ENCODE measurements at regions of chr17 and their contacts with region 1.

Region 1: GRCh38 chr17:75440738-75441448 is 15.5 kb upstream of the TMEM94 start:
- DNase-seq: no peak
- ATAC-seq: no peak
- H3K4me3 ChIP-seq: no peak overlapping the region
- H3K27ac ChIP-seq: no peak overlapping the region
- H3K4me1 ChIP-seq: no peaks in the 10 kb centered on the region
- H3K27me3 ChIP-seq: no peaks in the 10 kb centered on the region
- CTCF ChIP-seq: no peak

Region 2: DNA sequence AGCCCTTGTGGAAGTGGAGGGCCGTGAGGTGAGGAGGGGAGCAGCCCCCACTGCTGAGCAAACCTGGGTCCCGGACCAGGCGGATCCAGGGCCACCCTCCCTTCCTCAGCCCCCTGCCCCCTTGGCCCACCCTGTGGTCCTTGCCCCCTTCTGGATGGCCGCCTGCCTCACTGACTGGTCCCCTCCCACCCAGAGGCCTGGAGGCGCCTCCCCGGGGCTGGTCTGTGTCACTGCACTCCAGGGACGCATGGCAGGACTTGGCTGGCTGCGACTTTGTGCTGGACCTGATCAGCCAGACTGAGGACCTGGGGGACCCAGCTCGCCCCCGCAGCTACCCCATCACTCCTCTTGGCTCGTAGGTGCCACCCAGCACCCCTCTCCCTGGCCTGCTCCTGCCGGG is 173.1 kb after region 1 on chr17:
- CTCF ChIA-PET with region 1: no interaction called
- POLR2A ChIA-PET with region 1: interaction called, 10 read pairs
- in situ Hi-C with region 1: no loop called
- intact Hi-C with region 1: no loop called
- DNase-seq: no peak
- ATAC-seq: peak; percentile 44; the same call in 1 of the 2 replicates
- H3K4me3 ChIP-seq: no peak overlapping the region
- H3K27ac ChIP-seq: no peak overlapping the region
- H3K4me1 ChIP-seq: no peaks in the 10 kb centered on the region
- H3K27me3 ChIP-seq: no peaks in the 10 kb centered on the region
- CTCF ChIP-seq: no peak; the same call in 1 of the 2 replicates